Activated CD8-positive, alpha-beta T cell treated with anti-CD3 and anti-CD28 coated beads for 36 hours (primary cell): ENCODE measurements at regions of chr3 and their contacts with region 1.

Region 1: GRCh38 chr3:10224784-10225665 is 23.2 kb upstream of the TATDN2 start:
- DNase-seq: peak; percentile 87
- ATAC-seq: peak; percentile 76
- H3K4me3 Mint-ChIP-seq: no peak overlapping the region
- H3K27ac Mint-ChIP-seq: peak overlapping the region; percentile 66
- H3K4me1 Mint-ChIP-seq: peaks cover 62% of the 10 kb centered on the region
- H3K27me3 Mint-ChIP-seq: no peaks in the 10 kb centered on the region
- CTCF ChIP-seq: peak; percentile 91

Region 2: GRCh38 chr3:10010486-10011465 is 214.2 kb before region 1 on chr3:
- CTCF ChIA-PET with region 1: no interaction called
- POLR2A ChIA-PET with region 1: no interaction called
- intact Hi-C with region 1: no loop called
- DNase-seq: peak; percentile 92
- ATAC-seq: peak; percentile 88
- H3K4me3 Mint-ChIP-seq: peak overlapping the region; percentile 31
- H3K27ac Mint-ChIP-seq: no peak overlapping the region
- H3K4me1 Mint-ChIP-seq: peaks cover 18% of the 10 kb centered on the region
- H3K27me3 Mint-ChIP-seq: peaks cover 3% of the 10 kb centered on the region
- CTCF ChIP-seq: no peak

Region 3: DNA sequence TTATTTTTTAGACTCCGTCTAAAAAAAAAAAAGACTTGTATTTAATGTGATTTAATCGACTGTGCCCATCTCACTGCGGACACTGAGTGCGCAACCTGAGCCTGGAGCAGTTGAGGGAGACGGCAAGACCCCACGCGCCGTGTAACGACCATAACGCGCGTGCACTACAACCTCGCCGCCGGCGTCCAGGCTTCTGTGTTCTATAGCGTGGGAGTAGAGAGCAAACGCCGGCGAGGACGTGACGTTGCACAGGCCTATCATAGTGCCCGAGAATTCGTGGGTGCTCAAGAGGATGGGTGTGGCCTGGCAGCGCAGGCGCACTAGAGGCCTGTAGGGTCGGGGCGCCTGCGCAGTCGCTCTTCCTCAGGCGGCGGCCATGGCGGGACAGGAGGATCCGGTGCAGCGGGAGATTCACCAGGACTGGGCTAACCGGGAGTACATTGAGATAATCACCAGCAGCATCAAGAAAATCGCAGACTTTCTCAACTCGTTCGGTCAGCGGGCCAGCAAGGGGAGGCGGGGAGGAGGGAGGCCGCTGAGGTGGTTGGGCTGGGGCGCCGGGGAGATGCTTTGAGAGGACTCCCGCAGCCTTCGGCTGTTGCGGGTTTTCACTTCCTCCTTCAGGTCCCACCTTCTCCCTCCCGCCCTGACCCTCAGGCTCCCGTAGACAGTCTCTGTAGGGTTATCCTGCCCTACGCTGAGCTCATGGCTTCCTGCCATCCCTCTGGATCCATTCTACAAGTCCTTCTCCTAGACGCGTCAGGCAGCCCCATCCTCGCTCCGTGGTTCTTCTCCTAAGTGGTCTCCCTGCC is 109.5 kb before region 1 on chr3 and contains the start of gene BRK1:
- CTCF ChIA-PET with region 1: no interaction called
- POLR2A ChIA-PET with region 1: no interaction called
- intact Hi-C with region 1: loop called (anchors 1 kb)
- DNase-seq: peak; percentile 98
- ATAC-seq: peak; percentile 97
- H3K4me3 Mint-ChIP-seq: peak within 1 kb of the TSS; percentile 97
- H3K27ac Mint-ChIP-seq: peak within 1 kb of the TSS; percentile 97
- H3K4me1 Mint-ChIP-seq: peaks cover 26% of the 10 kb centered on the region
- H3K27me3 Mint-ChIP-seq: no peaks in the 10 kb centered on the region
- CTCF ChIP-seq: no peak
- total RNA-seq, gene BRK1: 107 to 108 TPM

Region 4: DNA sequence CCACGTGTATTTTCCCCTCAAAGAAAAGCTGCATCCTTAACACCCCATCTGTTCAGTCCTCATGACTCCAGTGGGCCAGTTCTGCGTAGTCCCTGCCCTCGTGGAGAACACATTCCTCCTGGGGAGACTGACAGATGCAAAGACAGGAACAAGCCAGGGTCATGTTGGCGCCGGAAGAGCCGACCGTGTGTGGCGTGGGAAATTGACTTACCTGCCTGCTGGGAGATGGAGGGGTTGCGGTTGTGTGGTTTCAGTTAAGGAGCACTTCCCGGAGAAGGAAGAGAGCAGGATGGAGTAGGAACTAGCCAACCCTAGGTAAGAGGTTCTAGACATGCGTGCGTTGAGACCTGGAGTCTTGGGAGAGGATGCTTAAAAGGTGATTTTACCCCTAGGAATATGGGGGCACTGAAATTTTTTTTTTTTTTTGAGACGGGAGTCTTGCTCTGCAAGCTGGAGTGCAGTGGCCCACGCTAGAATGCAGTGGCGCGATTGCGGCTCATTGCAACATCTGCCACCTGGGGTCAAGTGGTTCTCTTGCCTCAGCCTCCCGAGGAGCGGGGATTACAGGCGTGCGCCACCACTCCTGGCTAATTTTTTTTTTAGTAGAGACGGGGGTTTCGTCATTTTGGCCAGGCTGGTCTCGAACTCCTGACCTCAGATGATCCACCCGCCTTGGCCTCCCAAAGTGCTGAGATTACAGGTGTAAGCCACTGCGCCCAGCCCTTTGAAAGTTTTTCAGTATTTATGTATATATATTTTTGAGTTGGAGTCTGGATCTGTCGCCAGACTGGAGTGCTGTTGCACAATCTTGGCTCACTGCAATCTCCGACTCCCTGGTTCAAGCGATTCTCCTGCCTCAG is 82.1 kb before region 1 on chr3:
- CTCF ChIA-PET with region 1: interaction called, 4 read pairs
- POLR2A ChIA-PET with region 1: no interaction called
- intact Hi-C with region 1: loop called (anchors 5 kb)
- DNase-seq: peak; percentile 33
- ATAC-seq: no peak
- H3K4me3 Mint-ChIP-seq: peak overlapping the region; percentile 89
- H3K27ac Mint-ChIP-seq: peak overlapping the region; percentile 94
- H3K4me1 Mint-ChIP-seq: peaks cover 24% of the 10 kb centered on the region
- H3K27me3 Mint-ChIP-seq: no peaks in the 10 kb centered on the region
- CTCF ChIP-seq: no peak

Region 5: DNA sequence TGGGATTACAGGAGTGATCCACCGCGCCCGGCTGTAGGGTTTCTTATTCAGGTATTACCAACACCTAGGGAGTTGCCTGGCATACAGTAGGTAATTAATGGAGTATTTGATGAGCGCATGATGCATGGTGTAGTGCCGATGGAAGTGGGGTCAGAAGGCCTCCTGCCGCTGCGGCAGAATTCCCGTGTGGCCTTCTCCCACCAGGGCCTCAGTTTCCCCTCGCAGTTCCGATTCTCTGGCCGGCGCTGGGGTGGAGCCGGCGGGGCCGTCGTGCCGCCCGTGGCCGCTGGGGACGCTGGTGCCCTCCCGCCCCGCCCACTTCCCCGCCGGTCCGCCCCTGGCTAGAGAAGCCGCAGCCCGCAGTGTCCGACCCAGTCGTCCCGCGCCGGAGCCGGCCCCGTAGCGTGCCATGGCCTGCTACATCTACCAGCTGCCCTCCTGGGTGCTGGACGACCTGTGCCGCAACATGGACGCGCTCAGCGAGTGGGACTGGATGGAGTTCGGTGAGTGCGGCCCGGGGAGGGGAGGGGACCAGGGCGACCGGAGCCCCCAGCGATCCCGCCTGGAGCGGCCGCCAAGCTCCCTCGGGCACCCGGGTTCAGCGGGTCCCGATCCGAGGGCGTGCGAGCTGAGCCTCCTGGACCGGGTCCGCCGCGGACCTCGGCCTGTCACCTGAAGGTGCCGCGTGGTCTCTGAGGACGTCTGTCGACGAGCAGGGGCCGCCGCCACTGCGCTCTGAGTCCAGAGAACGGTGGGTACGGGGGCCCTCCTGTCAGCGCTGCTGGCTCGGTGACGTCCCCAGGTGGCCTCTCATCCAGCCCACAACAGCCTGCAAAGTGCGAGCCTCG is 60.3 kb before region 1 on chr3 and contains the start of gene IRAK2:
- CTCF ChIA-PET with region 1: interaction called, 11 read pairs
- POLR2A ChIA-PET with region 1: no interaction called
- intact Hi-C with region 1: loop called (anchors 10 kb)
- DNase-seq: peak; percentile 62
- ATAC-seq: peak; percentile 88
- H3K4me3 Mint-ChIP-seq: peak within 1 kb of the TSS; percentile 72
- H3K27ac Mint-ChIP-seq: peak within 1 kb of the TSS; percentile 15
- H3K4me1 Mint-ChIP-seq: peaks cover 12% of the 10 kb centered on the region
- H3K27me3 Mint-ChIP-seq: no peaks in the 10 kb centered on the region
- CTCF ChIP-seq: peak; percentile 99
- total RNA-seq, gene IRAK2: 3.0 TPM

Region 6: GRCh38 chr3:10192953-10193691 is 31.9 kb before region 1 on chr3:
- CTCF ChIA-PET with region 1: interaction called, 7 read pairs
- POLR2A ChIA-PET with region 1: interaction called, 6 read pairs
- intact Hi-C with region 1: loop called (anchors 5 kb)
- DNase-seq: peak; percentile 83
- ATAC-seq: peak; percentile 29
- H3K4me3 Mint-ChIP-seq: peak overlapping the region; percentile 55
- H3K27ac Mint-ChIP-seq: peak overlapping the region; percentile 98
- H3K4me1 Mint-ChIP-seq: peaks cover 83% of the 10 kb centered on the region
- H3K27me3 Mint-ChIP-seq: no peaks in the 10 kb centered on the region
- CTCF ChIP-seq: peak; percentile 32

Region 7: GRCh38 chr3:10334459-10334858 is 109.4 kb after region 1 on chr3:
- CTCF ChIA-PET with region 1: no interaction called
- POLR2A ChIA-PET with region 1: no interaction called
- intact Hi-C with region 1: no loop called
- DNase-seq: no peak
- ATAC-seq: no peak
- H3K4me3 Mint-ChIP-seq: no peak overlapping the region
- H3K27ac Mint-ChIP-seq: no peak overlapping the region
- H3K4me1 Mint-ChIP-seq: peaks cover 13% of the 10 kb centered on the region
- H3K27me3 Mint-ChIP-seq: peaks cover 4% of the 10 kb centered on the region
- CTCF ChIP-seq: no peak